CD4-positive, alpha-beta T cell (primary cell): ENCODE measurements at regions of chr6 and their contacts with region 1.

Region 1: GRCh38 chr6:722077-722524 is 29.2 kb upstream of the EXOC2 start:
- DNase-seq: peak; percentile 50 to 83 (median 64)
- ATAC-seq: peak; percentile 81
- H3K4me3 ChIP-seq: no peak overlapping the region
- H3K4me3 Mint-ChIP-seq: no peak overlapping the region
- H3K27ac ChIP-seq: no peak overlapping the region
- H3K27ac Mint-ChIP-seq: no peak overlapping the region
- H3K4me1 ChIP-seq: peaks cover 2% of the 10 kb centered on the region
- H3K4me1 Mint-ChIP-seq: peaks cover 4% of the 10 kb centered on the region
- H3K27me3 ChIP-seq: no peaks in the 10 kb centered on the region
- H3K27me3 Mint-ChIP-seq: peaks cover 23% of the 10 kb centered on the region
- CTCF ChIP-seq: peak; percentile 98

Region 2: DNA sequence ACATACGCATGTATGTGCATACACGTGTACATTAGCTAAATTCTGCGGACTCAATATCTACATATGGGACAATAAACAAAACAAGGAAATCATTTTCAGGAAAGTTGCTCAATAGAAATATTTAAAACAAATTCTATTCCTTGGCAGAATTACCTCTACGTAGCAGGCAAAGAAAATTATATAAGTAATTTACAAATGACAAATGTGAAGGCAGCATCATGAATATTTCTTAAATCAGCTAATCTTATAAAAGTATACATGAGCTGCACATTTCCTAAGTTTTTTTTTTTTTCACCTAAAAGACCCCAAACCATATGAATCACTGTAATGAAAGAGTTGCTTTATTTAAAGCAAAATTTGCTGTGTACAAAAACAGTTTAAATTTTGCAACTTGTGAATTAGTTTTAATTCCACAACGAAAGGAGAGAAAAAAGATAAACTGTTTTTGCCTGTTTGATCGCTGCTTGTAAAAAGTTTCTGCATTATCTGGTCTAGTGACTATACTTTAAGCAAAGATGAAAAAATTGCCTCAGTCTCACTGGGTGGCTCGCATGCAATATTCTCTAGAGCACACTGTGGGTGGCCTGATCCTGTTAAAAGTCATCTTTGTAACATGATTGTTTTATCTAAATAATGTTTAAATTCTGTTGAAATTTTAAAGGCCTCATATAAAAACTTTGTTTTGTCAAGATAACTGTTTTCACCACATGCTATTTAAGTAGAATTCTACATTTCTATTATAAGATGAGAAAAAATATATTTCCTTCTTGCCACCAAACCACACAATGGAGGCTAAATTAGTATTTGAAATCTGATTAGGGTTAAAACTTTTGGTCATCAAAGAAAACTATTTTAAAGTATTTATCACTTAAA is 122.3 kb before region 1 on chr6:
- CTCF ChIA-PET with region 1: no interaction called
- POLR2A ChIA-PET with region 1: no interaction called
- intact Hi-C with region 1: loop called in 1 of 2 experiments (anchors 5 kb)
- DNase-seq: no peak
- ATAC-seq: no peak
- H3K4me3 ChIP-seq: no peak overlapping the region
- H3K4me3 Mint-ChIP-seq: no peak overlapping the region
- H3K27ac ChIP-seq: no peak overlapping the region
- H3K27ac Mint-ChIP-seq: no peak overlapping the region
- H3K4me1 ChIP-seq: no peaks in the 10 kb centered on the region
- H3K4me1 Mint-ChIP-seq: no peaks in the 10 kb centered on the region
- H3K27me3 ChIP-seq: no peaks in the 10 kb centered on the region
- H3K27me3 Mint-ChIP-seq: no peaks in the 10 kb centered on the region
- CTCF ChIP-seq: no peak

Region 3: GRCh38 chr6:710601-711571 is 11.2 kb before region 1 on chr6:
- CTCF ChIA-PET with region 1: interaction called, 15 read pairs
- POLR2A ChIA-PET with region 1: interaction called, 17 read pairs
- intact Hi-C with region 1: no loop called
- DNase-seq: peak; percentile 10 to 81 (median 32)
- ATAC-seq: peak; percentile 91
- H3K4me3 ChIP-seq: peak overlapping the region; percentile 75
- H3K4me3 Mint-ChIP-seq: peak overlapping the region; percentile 97
- H3K27ac ChIP-seq: peak overlapping the region; percentile 68 to 88
- H3K27ac Mint-ChIP-seq: peak overlapping the region; percentile 86
- H3K4me1 ChIP-seq: peaks cover 11% of the 10 kb centered on the region
- H3K4me1 Mint-ChIP-seq: peaks cover 20% of the 10 kb centered on the region
- H3K27me3 ChIP-seq: no peaks in the 10 kb centered on the region
- H3K27me3 Mint-ChIP-seq: peaks cover 6% of the 10 kb centered on the region
- CTCF ChIP-seq: no peak

Region 4: GRCh38 chr6:1396952-1397868 is 675.1 kb after region 1 on chr6:
- CTCF ChIA-PET with region 1: interaction called, 5 read pairs
- POLR2A ChIA-PET with region 1: no interaction called
- intact Hi-C with region 1: loop called in 1 of 2 experiments (anchors 10 kb)
- DNase-seq: peak; percentile 47 to 81 (median 63)
- ATAC-seq: peak; percentile 63
- H3K4me3 ChIP-seq: no peak overlapping the region
- H3K4me3 Mint-ChIP-seq: no peak overlapping the region
- H3K27ac ChIP-seq: no peak overlapping the region
- H3K27ac Mint-ChIP-seq: no peak overlapping the region
- H3K4me1 ChIP-seq: peaks cover 14% of the 10 kb centered on the region
- H3K4me1 Mint-ChIP-seq: peaks cover 12% of the 10 kb centered on the region
- H3K27me3 ChIP-seq: peaks cover 45 to 84% of the 10 kb centered on the region in 2 experiments
- H3K27me3 Mint-ChIP-seq: peaks cover 72% of the 10 kb centered on the region
- CTCF ChIP-seq: peak; percentile 96

Region 5: DNA sequence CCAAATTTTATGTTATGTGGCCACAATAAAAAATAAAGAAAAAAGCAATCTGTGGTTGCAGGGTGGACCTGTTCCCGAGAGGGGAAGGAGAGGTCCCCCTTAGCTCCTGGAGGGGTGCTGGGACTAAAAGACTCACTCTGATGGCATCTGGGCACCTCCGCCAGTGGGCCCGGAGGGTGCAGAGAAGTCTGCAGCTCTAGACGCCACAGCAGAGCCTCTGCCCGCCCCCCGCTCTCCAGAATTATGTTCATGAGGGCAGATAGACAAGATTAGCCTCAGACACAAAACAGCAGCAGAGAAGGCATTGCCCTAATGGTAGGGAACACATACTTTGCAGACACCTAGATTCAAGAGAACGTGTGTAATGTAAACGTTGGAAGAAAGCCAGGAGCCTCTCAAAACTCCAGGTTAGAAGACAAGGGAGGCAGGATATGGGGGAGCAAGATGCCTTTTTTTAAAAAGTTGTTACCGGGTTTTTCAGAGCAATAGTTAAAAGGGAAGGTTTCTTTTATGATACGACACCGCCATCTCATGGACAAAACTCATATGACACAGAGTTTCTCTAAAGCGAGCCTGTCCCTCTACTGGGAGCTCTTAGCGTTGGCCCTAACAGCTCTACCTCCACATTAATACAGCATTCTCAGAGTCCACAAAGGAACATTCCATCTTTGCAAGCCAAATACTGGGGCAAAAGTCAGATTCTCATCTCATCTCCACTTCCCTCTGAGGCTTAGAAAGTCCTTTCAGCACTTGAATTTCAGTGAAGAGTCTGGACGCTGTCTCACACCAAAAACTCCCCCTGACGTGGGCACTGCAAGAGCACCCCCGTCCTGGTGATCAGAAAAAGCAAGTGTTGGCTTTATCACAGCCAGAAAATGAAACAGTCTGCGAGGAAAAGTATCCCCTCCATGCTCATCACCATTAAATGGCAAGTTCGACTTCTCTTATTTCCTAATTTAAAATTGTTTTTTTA is 714.5 kb after region 1 on chr6:
- CTCF ChIA-PET with region 1: interaction called, 5 read pairs
- POLR2A ChIA-PET with region 1: no interaction called
- intact Hi-C with region 1: loop called in 1 of 2 experiments (anchors 2 kb)
- DNase-seq: peak in 11 of 14 experiments; percentile 7 to 72 (median 26)
- ATAC-seq: peak; percentile 82
- H3K4me3 ChIP-seq: no peak overlapping the region
- H3K4me3 Mint-ChIP-seq: no peak overlapping the region
- H3K27ac ChIP-seq: no peak overlapping the region
- H3K27ac Mint-ChIP-seq: no peak overlapping the region
- H3K4me1 ChIP-seq: no peaks in the 10 kb centered on the region
- H3K4me1 Mint-ChIP-seq: peaks cover 6% of the 10 kb centered on the region
- H3K27me3 ChIP-seq: peaks cover 9 to 20% of the 10 kb centered on the region in 2 experiments
- H3K27me3 Mint-ChIP-seq: peaks cover 55% of the 10 kb centered on the region
- CTCF ChIP-seq: peak; percentile 79